ENCODE measurements at regions of chr13 and their contacts with region 1.

Region 1: GRCh38 chr13:98335721-98336120 is 158.7 kb upstream of the RNF113B start:
- DNase-seq: no peak
- ATAC-seq: no peak
- H3K4me3 ChIP-seq: no peak overlapping the region
- H3K27ac ChIP-seq: no peak overlapping the region
- H3K4me1 ChIP-seq: peaks cover 0 to 10% (median 0%) of the 10 kb centered on the region in 9 donors
- H3K27me3 ChIP-seq: no peaks in the 10 kb centered on the region
- CTCF ChIP-seq: no peak

Region 2: GRCh38 chr13:98265692-98266551 is 69.8 kb before region 1 on chr13:
- intact Hi-C with region 1: loop called in 1 of 10 experiments (anchors 2 kb)
- DNase-seq: no peak
- ATAC-seq: peak in 5 of 8 donors; percentile 14 to 46 (median 29)
- H3K4me3 ChIP-seq: no peak overlapping the region
- H3K27ac ChIP-seq: peak overlapping the region in 1 of 10 donors; percentile 15
- H3K4me1 ChIP-seq: peaks cover 0 to 18% (median 0%) of the 10 kb centered on the region in 9 donors
- H3K27me3 ChIP-seq: no peaks in the 10 kb centered on the region
- CTCF ChIP-seq: no peak

Region 3: DNA sequence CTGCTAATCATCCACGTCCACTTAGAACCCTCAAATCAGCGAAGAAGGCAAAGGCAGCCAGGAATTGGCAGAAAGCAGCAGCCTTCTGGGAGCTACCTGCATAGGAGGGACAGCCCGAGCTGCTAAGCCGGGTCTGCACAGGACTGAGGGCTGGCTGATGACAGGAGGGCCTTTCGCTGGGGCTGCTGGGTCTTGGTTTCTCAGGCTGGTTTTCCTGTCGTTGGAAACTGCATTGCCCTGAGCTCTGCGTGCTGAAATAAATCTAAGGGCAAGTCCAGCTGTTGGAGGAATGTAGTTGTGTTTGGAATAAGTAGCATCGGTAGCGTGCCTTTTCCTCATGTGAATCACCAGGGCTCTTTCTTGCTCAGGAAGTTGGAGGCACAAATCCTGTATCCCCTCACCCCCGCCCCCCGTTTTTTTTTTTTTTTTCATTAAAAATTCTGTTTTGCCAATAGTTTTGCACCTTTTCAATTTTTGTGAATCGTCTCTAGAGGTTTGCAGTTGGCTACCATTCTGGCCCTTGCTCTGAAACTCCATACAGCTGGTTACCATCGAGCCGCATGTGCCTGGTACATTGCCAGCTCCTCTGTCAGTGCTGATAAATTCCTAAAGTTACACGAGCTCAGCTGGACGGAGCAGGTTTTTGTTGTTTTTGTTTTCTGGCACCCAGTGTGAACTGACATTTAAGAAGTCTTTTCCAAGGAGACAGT is 35.2 kb after region 1 on chr13:
- intact Hi-C with region 1: no loop called
- DNase-seq: peak; percentile 46 to 47
- ATAC-seq: peak; percentile 38 to 85 (median 71)
- H3K4me3 ChIP-seq: no peak overlapping the region
- H3K27ac ChIP-seq: no peak overlapping the region
- H3K4me1 ChIP-seq: peaks cover 0 to 16% (median 5%) of the 10 kb centered on the region in 9 donors
- H3K27me3 ChIP-seq: no peaks in the 10 kb centered on the region
- CTCF ChIP-seq: no peak

Measured in heart right ventricle (tissue), 16 donors.